ENCODE measurements at regions of chr15 and their contacts with region 1.

Region 1: GRCh38 chr15:74307827-74308644 is 59.4 kb downstream of the CYP11A1 start:
- DNase-seq: peak in 4 of 6 donors; percentile 32 to 51 (median 43)
- ATAC-seq: peak; percentile 50 to 92 (median 86)
- H3K4me3 ChIP-seq: no peak overlapping the region
- H3K27ac ChIP-seq: no peak overlapping the region
- H3K4me1 ChIP-seq: no peaks in the 10 kb centered on the region
- H3K27me3 ChIP-seq: peaks cover 0 to 7% (median 0%) of the 10 kb centered on the region in 4 donors
- CTCF ChIP-seq: peak; percentile 24 to 51 (median 50)

Region 2: DNA sequence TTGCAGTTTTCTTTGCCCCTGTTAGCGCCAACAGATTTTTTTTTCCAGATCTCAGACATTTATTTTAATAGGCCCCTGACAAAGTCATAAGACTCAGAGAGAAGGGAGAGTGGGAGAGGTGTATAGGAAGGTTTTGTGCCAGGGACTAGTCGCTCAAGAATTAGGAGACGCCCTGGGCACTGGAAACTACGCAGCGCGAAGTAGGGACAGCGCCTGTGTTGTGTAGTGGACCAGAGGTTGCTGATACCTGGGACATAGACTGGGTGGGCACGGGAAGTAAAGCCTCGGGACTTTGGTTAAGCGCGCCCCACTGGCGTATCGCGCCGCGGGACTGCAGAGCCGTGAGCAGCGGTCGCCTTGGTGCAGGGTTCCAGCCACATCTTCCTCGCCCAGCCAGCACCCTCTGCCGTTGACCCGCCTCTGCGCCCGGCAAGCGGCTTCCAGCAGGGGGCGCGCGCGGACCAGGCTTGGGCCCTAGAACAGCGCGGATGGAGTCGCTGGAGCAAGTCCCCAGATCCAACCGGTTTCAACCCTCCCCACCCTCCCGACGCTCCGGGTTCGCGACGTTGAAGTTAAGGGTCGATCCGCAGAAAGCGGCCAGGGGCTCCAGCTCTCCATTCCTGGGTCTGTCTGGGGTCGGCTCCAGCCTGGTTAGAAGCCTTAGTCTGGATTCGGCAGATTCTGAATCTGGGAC is 180.6 kb before region 1 on chr15:
- intact Hi-C with region 1: loop called (anchors 5 to 10 kb)
- DNase-seq: peak; percentile 68 to 100 (median 88)
- ATAC-seq: peak; percentile 94 to 99 (median 98)
- H3K4me3 ChIP-seq: peak overlapping the region in 1 of 4 donors; percentile 36
- H3K27ac ChIP-seq: no peak overlapping the region
- H3K4me1 ChIP-seq: peaks cover 0 to 7% (median 4%) of the 10 kb centered on the region in 3 donors
- H3K27me3 ChIP-seq: peaks cover 0 to 22% (median 4%) of the 10 kb centered on the region in 4 donors
- CTCF ChIP-seq: peak; percentile 93 to 97 (median 97)

Region 3: DNA sequence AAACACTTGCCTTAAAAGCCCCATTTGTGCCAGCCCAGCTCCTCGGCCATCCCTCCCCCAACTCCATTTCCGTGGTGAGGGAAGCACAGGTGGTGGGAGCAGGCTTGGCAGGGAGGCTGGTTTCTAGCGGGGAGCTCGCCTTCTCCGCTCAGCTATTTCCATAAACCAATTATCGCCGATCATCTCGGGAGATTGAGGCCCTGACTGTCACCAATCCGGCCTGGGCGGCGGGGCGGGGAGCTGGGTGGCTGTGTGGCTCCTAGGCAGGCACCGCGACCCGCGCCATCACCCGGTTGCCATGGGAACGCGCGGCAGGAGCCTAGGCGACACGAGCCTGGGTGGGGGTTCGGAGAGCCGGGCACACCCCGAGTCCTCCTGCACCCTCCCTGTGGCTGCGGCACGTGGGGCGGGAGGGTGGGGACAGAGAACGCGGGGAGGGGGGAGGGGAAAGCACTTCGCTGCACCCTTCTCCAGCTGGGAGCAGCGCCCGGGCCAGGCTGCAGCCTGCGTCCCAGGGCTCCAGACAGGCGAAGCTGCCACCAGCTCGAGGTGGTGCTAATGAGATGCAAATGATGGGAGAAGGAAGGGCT is 62.6 kb before region 1 on chr15:
- intact Hi-C with region 1: no loop called
- DNase-seq: no peak
- ATAC-seq: peak in 2 of 4 donors; percentile 19 to 36
- H3K4me3 ChIP-seq: no peak overlapping the region
- H3K27ac ChIP-seq: no peak overlapping the region
- H3K4me1 ChIP-seq: peaks cover under 1 to 17% (median 3%) of the 10 kb centered on the region in 3 donors
- H3K27me3 ChIP-seq: no peaks in the 10 kb centered on the region
- CTCF ChIP-seq: no peak

Region 4: GRCh38 chr15:75639709-75640482 is 1331.9 kb after region 1 on chr15 and contains the start of gene IMP3:
- intact Hi-C with region 1: no loop called
- DNase-seq: peak; percentile 92 to 96 (median 95)
- ATAC-seq: peak; percentile 93 to 96 (median 94)
- H3K4me3 ChIP-seq: peak within 1 kb of the TSS; percentile 87 to 96 (median 90)
- H3K27ac ChIP-seq: peak within 1 kb of the TSS; percentile 90 to 96 (median 93)
- H3K4me1 ChIP-seq: peaks cover 5 to 23% (median 11%) of the 10 kb centered on the region in 3 donors
- H3K27me3 ChIP-seq: no peaks in the 10 kb centered on the region
- CTCF ChIP-seq: no peak
- total RNA-seq, gene IMP3: 18.7 to 34.8 (median 29.2) TPM

Measured in pancreas (tissue), 10 donors.